AG04450 (cell line): ENCODE measurements at regions of chr11 and their contacts with region 1.

Region 1: DNA sequence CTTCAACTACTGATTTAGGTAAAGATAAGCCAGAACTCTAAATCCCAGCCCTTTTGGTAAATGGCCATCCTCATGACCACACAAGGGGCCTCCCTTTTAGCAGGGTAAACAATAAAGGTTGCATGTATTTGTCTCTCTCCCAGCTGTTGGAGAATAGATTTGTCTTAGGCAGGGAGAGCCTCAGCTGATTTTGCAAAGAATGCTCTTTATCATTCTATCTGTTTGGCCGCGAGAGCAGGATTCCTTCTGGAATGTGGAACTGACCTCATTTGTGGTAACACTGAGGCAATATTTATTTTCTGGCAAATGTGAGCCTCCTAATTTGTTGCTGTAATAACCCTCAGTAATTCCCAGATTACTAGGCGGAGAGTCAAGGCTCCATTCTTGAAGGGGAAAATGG is 15.3 kb downstream of the PTS start:
- DNase-seq: peak; percentile 64
- H3K4me3 ChIP-seq: no peak overlapping the region
- H3K27ac ChIP-seq: peak overlapping the region; percentile 21
- H3K27me3 ChIP-seq: no peaks in the 10 kb centered on the region
- CTCF ChIP-seq: no peak

Region 2: GRCh38 chr11:112229746-112230433 is 11.6 kb before region 1 on chr11:
- CTCF ChIA-PET with region 1: interaction called, 4 read pairs
- POLR2A ChIA-PET with region 1: interaction called, 10 read pairs
- DNase-seq: peak; percentile 65
- H3K4me3 ChIP-seq: no peak overlapping the region
- H3K27ac ChIP-seq: peak overlapping the region; percentile 40
- H3K27me3 ChIP-seq: no peaks in the 10 kb centered on the region
- CTCF ChIP-seq: no peak

Region 3: DNA sequence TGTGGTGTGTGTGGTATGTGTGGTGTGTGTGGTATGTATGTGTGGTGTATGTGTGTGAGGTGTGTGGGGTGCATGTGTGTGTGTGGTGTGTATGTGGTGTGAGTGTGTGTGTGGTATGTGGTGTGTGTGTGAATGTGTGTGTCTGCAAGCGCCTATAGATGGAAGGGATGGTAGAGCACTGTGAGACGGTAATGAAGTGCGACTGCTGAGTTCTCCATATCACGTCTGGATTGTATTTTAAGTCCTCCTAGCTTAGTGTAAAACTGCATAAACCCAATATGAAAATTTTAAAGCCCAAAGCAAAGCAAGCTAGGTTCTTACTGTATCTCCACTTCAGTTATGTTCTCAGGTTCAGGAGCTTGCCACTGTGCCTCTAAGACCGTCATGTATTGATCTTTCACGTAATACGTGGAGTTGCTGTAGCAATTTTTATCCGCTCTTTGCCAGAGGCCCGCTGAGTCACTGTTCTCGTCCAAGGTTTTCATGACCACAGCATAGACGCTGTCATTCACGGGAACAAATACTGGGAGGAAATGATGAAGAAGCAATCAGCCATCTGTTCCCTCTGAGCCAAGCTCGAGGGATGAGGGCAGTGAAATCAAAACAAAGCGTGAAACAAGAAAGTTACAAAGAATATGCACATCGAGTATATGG is 13.7 kb after region 1 on chr11:
- CTCF ChIA-PET with region 1: no interaction called
- POLR2A ChIA-PET with region 1: no interaction called
- DNase-seq: no peak
- H3K4me3 ChIP-seq: no peak overlapping the region
- H3K27ac ChIP-seq: no peak overlapping the region
- H3K27me3 ChIP-seq: no peaks in the 10 kb centered on the region
- CTCF ChIP-seq: no peak